GM13977 (cell line): ENCODE measurements at regions of chr12 and their contacts with region 1.

Region 1: DNA sequence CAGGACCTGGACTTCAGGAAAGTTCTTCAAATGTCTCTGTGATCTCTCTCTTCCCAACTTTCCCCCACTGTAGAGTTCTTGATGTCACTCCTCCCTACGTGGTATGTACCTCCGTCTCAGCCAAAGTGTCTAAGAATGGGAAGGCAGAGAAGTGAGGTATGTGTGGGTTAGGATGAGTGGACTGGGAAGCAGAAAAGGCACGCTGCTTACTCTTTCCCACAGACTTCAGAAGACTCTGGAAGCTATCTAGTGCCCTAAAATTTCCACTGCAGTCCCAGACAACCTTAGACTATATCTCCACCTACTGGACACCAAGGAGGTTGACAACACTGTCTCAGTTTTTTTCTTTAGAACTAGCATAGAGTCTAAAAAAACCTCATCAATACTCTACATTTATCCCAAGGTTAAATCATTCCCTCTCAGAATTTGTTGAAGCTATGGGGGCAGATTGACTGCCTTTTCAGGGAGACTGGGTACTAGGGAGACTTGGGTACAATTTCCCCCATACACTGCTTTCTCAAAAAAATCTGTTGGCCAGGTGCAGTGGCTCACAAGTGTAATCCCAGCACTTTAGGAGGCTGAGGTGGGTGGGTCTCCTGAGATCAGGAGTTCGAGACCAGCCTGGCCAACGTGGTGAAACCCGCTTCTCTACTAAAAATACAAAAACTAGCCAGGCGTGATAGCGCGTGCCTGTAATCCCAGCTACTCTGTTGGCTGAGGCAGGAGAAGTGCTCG is 20.6 kb upstream of the ITGA5 start:
- DNase-seq: peak; percentile 67
- CTCF ChIP-seq: peak; percentile 69

Region 2: DNA sequence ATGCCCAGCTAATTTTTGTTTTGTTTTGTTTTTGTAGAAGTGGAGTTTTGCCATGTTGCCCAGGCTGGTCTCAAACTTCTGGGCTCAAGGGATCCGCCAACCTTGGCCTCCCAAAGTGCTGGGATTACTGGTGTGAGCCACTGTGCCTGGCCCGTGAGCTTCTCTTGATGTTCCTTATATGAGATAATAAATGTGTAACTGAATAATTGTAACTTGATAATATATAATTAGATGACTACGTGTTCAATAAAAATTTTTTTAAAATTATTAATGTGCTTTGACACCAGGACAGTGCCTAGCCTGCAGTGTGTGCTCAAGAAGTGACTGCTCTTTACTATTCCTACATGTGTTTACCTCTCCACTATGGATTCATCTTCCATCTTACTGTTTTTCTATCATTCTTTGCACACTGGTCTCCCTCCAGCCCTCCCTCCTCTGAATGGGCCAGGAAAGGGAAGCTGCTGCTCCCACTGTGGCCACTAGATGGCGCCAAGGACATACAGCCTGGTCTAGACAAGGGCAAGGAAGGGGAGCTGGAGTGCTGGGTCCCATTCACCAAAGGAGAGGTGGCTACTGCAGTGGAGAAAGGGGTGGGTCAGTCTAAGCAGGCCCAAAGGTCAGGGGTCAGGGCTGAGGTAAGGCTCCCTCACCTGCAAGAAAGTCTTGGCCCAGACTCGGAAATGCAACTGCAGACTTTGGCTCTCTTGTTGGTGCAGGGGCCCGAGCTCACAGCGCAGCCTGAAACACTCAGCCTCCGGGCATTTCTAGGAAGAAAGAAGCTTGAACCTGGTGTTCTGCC is 40.5 kb before region 1 on chr12:
- in situ Hi-C with region 1: loop called (anchors 5 kb)
- DNase-seq: peak; percentile 85
- CTCF ChIP-seq: peak; percentile 99